Activated CD4-positive, alpha-beta T cell treated with anti-CD3 and anti-CD28 coated beads for 36 hours (primary cell): ENCODE measurements at regions of chr21 and their contacts with region 1.

Region 1: GRCh38 chr21:17491716-17492414 is 21.0 kb upstream of the CXADR start:
- DNase-seq: peak; percentile 25
- ATAC-seq: no peak
- H3K4me3 Mint-ChIP-seq: no peak overlapping the region
- H3K27ac Mint-ChIP-seq: no peak overlapping the region
- H3K4me1 Mint-ChIP-seq: peaks cover 16% of the 10 kb centered on the region
- H3K27me3 Mint-ChIP-seq: peaks cover 10% of the 10 kb centered on the region

Region 2: DNA sequence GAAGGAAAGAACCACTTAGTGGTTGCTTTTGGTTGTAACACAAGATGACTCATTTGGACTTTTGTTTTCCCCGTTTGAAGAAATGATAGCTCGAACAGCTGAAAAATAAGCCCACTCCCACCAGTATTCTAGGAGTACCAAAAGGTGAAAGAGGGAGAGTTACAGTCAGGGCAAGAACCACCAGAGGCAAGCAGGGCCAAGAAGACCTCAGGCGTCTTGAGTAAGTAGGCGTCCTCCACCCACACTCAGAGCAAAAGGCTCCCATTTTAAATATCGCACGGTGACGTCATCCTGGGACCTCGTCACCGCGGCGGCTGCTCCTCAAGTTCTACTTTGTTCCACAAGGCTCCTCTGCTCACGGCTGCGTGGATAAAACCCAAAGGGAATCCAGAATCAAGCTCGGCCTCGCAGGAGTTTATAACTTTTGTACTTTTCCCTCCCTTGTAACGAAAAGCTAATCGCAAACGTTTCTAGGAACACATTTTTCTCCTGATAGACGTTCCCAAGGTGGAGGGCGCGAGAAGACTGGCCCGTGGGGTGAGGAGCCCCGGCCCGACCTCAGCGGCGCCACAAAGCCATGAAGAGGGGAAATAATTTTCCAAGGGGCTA is 119.7 kb after region 1 on chr21:
- CTCF ChIA-PET with region 1: no interaction called
- POLR2A ChIA-PET with region 1: no interaction called
- intact Hi-C with region 1: loop called in 1 of 2 experiments (anchors 1 kb)
- DNase-seq: peak; percentile 91
- ATAC-seq: peak; percentile 64
- H3K4me3 Mint-ChIP-seq: peak overlapping the region; percentile 75
- H3K27ac Mint-ChIP-seq: peak overlapping the region; percentile 94
- H3K4me1 Mint-ChIP-seq: peaks cover 35% of the 10 kb centered on the region
- H3K27me3 Mint-ChIP-seq: no peaks in the 10 kb centered on the region